Right cardiac atrium (tissue), 5 donors: ENCODE measurements at regions of chr15 and their contacts with region 1.

Region 1: GRCh38 chr15:39495871-39496840 is 84.7 kb upstream of the THBS1 start:
- DNase-seq: no peak
- ATAC-seq: no peak
- H3K4me3 ChIP-seq: no peak overlapping the region
- H3K27ac ChIP-seq: no peak overlapping the region
- H3K4me1 ChIP-seq: peaks cover 9% of the 10 kb centered on the region
- H3K27me3 ChIP-seq: no peaks in the 10 kb centered on the region

Region 2: DNA sequence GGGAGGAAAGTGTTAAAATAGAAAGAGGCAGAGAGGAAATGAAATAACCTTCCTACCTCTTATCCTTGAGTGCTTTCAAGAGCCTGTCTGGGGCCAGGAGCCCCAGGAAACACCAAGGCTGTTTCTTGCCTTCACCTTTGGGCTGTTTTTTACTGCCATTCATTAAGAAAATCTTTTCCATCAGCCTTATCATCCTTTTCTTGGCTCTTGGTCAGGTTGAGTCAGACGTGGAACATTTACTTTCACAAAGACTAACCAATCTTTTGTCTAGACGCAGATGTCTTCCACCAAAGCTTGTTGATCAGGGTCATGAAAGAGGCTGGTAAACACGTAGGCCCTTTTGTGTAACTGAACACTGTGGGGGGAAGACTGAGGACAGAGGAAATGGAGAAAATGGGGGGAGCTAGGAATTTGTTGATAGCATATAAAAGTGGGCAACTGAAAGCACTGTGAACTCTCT is 66.2 kb before region 1 on chr15:
- intact Hi-C with region 1: loop called in 1 of 4 experiments (anchors 10 kb)
- DNase-seq: no peak
- ATAC-seq: no peak
- H3K4me3 ChIP-seq: no peak overlapping the region
- H3K27ac ChIP-seq: peak overlapping the region; percentile 38
- H3K4me1 ChIP-seq: peaks cover 18% of the 10 kb centered on the region
- H3K27me3 ChIP-seq: no peaks in the 10 kb centered on the region